ENCODE measurements at regions of chr12 and their contacts with region 1.

Region 1: DNA sequence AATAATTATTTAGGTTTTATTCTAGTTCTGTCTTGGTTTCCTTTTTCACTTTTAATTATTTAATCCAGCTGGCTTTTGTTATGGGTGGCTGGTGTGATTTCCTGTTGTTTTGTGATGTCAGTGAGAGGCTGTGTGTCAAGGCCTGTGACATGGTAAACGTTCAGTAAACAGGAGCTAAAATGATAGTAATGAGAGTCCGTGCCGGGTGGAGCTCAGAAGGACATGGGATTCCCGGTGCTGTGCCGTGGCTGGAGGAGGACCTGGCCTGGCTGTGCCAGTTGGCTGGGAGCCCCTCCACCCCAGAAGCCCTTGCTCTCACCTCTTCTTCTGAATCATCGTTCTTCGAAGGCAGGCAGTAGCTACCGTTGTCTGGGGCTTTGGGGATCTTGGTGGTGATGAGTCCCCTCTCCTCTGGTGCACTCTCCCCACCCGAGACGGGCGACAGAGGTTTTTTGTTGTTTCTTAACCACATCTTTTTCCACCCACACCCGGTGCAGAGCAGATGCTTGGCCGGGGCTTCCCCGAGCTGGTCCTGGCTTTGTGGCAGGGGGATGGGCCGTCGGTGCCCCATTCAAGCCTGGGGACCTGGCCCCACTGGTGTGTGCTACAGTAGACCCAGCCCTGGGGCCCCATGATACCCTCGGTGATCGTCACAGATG is 29.1 kb downstream of the SH2B3 start:
- DNase-seq: peak; percentile 61 to 92 (median 86)
- ATAC-seq: peak; percentile 76 to 82
- H3K4me3 Mint-ChIP-seq: peak overlapping the region; percentile 69 to 89 (median 83)
- H3K27ac Mint-ChIP-seq: peak overlapping the region; percentile 98 to 100 (median 99)
- H3K4me1 Mint-ChIP-seq: peaks cover 56 to 95% (median 92%) of the 10 kb centered on the region in 4 donors
- H3K27me3 Mint-ChIP-seq: no peaks in the 10 kb centered on the region

Region 2: DNA sequence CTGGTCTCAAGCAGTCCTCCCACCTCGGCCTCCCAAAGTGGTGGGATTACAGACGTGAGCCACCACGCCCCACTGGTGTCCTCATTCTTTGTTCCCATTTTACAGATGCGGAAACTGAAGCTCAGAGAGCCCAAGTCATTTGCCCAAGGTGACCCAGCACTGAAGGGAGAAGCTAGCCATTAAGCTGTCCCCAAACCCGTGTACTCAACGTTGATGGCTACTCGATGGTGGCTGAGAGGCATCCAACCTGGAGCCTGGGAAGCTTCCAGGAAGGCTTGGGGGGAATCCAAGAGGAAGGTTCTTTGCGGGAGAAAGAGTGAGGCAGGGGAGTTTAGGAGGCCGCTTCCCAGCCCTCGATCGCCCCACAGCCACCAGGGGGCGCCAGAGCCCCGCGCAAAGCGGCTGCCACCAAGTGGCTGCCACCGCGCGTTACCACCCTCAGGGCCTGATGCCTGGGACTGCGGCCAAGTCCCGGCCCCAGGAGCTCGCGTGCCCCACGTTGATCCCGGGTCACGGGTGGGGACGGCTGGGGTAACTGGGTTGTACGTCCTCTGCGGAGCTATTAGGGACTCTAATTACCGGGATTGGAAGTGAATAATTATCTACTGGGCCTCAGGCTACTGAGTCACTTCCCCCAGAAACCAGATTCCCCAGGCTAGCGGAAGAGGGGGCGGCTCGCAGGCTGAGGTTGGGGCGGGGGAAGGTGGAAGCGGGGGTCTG is 37.9 kb before region 1 on chr12:
- POLR2A ChIA-PET with region 1: interaction called, 12 read pairs
- DNase-seq: peak; percentile 71 to 97 (median 88)
- ATAC-seq: peak; percentile 98
- H3K4me3 Mint-ChIP-seq: peak overlapping the region; percentile 66 to 87 (median 78)
- H3K27ac Mint-ChIP-seq: peak overlapping the region in 8 of 10 donors; percentile 29 to 90 (median 70)
- H3K4me1 Mint-ChIP-seq: peaks cover 7 to 29% (median 14%) of the 10 kb centered on the region in 4 donors
- H3K27me3 Mint-ChIP-seq: no peaks in the 10 kb centered on the region

Region 3: GRCh38 chr12:111405149-111405860 is 29.5 kb before region 1 on chr12:
- POLR2A ChIA-PET with region 1: interaction called, 106 read pairs
- DNase-seq: peak; percentile 96 to 100 (median 98)
- ATAC-seq: peak; percentile 69 to 80
- H3K4me3 Mint-ChIP-seq: peak overlapping the region; percentile 81 to 94 (median 91)
- H3K27ac Mint-ChIP-seq: peak overlapping the region; percentile 63 to 92 (median 90)
- H3K4me1 Mint-ChIP-seq: peaks cover 23 to 61% (median 58%) of the 10 kb centered on the region in 4 donors
- H3K27me3 Mint-ChIP-seq: no peaks in the 10 kb centered on the region

Region 4: DNA sequence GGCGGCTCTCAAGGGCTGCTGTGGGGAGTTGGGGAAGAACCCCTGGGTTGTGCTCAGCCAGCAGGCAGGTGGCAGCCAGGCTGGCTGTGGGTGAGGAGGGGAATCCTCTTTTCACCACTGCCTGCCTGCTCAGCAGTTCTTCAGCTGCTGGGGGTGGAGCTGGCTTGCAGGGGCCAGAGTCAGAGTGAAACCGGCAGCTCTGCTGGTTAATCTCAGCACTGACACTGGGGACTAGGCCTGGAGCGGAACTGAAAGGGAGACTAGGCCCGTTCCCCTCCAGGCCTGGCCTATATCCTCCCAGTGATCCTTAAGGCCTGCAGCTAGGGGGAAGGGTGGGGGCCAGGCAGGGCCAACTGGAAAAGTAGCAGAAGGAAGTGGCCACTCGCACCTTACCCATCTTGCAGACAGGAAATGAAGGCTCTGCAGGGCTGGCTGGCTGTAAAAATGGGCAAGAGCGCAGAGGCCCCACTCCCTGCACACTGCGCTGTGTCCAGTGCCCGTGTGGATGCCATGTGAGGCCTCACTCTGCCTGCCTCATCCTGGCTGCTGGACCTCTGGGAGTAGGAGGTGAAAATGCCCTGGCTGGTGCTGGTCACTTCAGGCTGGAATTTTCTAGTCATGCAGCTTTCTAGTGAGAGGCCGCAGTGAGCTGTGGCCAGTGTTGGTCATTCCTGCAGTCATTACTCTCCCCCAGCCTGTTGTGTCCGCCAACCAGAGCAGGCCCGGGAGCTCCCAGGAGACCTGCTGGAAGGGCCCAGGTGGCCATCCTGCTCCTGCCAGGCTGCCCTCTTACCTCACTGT is 10.3 kb after region 1 on chr12:
- POLR2A ChIA-PET with region 1: interaction called, 46 read pairs
- DNase-seq: peak; percentile 44 to 83 (median 70)
- ATAC-seq: peak; percentile 98 to 99
- H3K4me3 Mint-ChIP-seq: peak overlapping the region in 9 of 10 donors; percentile 39 to 77 (median 71)
- H3K27ac Mint-ChIP-seq: peak overlapping the region; percentile 73 to 95 (median 90)
- H3K4me1 Mint-ChIP-seq: peaks cover 29 to 83% (median 67%) of the 10 kb centered on the region in 4 donors
- H3K27me3 Mint-ChIP-seq: no peaks in the 10 kb centered on the region

Region 5: DNA sequence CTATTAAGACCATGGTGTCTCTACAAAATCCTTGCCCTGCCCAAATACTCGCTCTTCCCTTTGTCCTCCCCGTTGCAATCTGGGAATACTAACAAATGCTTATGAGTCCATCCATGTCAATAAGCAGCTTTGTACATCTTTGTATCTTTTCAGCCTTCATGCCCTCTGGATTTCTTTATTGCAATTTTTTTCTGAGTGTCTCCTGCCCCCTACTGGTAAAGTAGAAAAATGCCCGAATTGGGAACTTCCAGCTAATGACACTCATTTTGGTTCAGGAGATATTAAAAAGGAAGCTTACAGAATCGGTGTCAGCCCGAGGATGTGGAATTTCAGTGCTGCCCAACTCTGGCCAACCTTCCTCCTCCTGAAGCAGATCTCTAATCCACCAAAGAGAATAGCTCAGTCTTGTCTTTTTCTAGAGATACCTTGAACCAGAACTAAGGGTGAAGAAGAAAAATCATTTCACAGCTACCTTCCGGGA is 16.9 kb after region 1 on chr12:
- POLR2A ChIA-PET with region 1: interaction called, 46 read pairs
- DNase-seq: peak in 5 of 10 donors; percentile 26 to 83 (median 73)
- ATAC-seq: peak; percentile 59 to 70
- H3K4me3 Mint-ChIP-seq: no peak overlapping the region
- H3K27ac Mint-ChIP-seq: peak overlapping the region in 9 of 10 donors; percentile 1 to 83 (median 65)
- H3K4me1 Mint-ChIP-seq: peaks cover 8 to 49% (median 21%) of the 10 kb centered on the region in 4 donors
- H3K27me3 Mint-ChIP-seq: no peaks in the 10 kb centered on the region

Region 6: DNA sequence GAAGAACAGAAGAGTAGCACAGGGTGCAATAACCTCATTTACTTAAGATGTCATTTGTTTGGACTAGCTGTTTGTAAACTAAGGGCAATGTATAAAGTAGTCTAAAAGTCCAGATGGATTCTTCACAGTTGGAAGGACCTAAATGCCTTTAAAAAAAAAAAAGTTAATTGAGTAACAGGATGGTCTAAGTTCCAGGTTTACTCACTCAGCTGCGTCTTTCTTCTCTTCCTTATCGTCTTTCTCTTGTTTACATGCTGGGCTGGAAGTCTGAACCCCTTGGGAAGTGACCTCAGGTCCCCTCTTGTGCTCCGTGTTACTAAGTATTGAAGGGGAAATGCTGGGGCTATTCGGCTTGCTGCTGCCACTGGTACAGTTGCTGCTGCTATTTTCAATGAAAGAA is 53.5 kb after region 1 on chr12:
- POLR2A ChIA-PET with region 1: no interaction called
- DNase-seq: no peak
- ATAC-seq: no peak
- H3K4me3 Mint-ChIP-seq: no peak overlapping the region
- H3K27ac Mint-ChIP-seq: peak overlapping the region in 3 of 10 donors; percentile 20 to 79 (median 57)
- H3K4me1 Mint-ChIP-seq: peaks cover 0 to 3% (median 0%) of the 10 kb centered on the region in 4 donors
- H3K27me3 Mint-ChIP-seq: no peaks in the 10 kb centered on the region

Measured in naive thymus-derived CD8-positive, alpha-beta T cell (primary cell).